Calu3 (cell line): ENCODE measurements at regions of chr7 and their contacts with region 1.

Region 1: DNA sequence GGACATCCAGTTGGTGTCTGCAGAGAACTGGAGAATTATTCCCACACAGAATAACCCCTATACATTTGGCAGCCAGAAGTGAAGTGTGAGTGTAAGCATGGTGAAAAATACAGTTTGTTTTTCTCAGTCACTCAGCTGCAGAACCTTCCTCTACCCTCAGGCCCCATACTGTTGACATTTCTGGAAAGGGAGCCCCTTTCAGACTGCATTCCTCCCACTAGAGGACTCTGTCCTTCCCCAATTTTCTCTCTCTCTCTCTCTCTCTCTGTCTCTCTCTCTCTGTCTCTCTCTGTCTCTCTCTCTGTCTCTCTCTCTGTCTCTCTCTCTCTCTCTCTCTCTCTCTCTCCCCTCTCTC is 86.8 kb upstream of the STEAP1B start:
- DNase-seq: peak; percentile 75
- H3K4me3 Mint-ChIP-seq: peak overlapping the region; percentile 44
- H3K27ac Mint-ChIP-seq: peak overlapping the region; percentile 93
- H3K4me1 Mint-ChIP-seq: peaks cover 78% of the 10 kb centered on the region
- H3K27me3 Mint-ChIP-seq: no peaks in the 10 kb centered on the region
- CTCF ChIP-seq: peak; percentile 31

Region 2: DNA sequence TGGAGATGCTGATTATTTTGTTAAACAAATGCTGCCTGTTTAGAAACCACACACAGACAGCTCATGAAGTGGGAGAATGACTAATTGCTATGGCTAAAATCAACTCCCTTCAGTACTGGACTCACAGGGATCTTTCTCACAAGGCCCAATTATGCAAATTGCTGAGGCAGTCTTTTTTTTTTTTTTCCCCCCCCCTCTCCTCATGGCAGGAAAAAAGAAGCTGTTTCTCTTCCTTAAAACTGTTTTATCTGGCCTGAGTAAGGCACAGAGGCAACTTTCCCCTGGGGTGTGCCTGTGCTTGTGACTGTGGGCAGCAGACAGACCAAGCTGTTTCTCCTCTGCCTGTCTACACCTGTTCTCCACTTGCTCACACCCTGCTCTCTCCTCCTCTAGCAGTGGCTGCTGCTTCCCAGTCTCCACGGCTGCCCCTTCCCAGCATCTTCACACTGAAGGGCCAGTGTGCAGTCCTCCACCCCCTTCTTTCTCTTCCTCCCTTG is 21.4 kb before region 1 on chr7:
- CTCF ChIA-PET with region 1: interaction called, 17 read pairs
- intact Hi-C with region 1: loop called (anchors 1 kb)
- DNase-seq: peak; percentile 45
- H3K4me3 Mint-ChIP-seq: peak overlapping the region; percentile 64
- H3K27ac Mint-ChIP-seq: peak overlapping the region; percentile 82
- H3K4me1 Mint-ChIP-seq: peaks cover 73% of the 10 kb centered on the region
- H3K27me3 Mint-ChIP-seq: no peaks in the 10 kb centered on the region
- CTCF ChIP-seq: no peak

Region 3: GRCh38 chr7:22647451-22648257 is 60.9 kb after region 1 on chr7:
- CTCF ChIA-PET with region 1: interaction called, 4 read pairs
- intact Hi-C with region 1: loop called (anchors 5 kb)
- DNase-seq: no peak
- H3K4me3 Mint-ChIP-seq: peak overlapping the region; percentile 4
- H3K27ac Mint-ChIP-seq: peak overlapping the region; percentile 71
- H3K4me1 Mint-ChIP-seq: peaks cover 39% of the 10 kb centered on the region
- H3K27me3 Mint-ChIP-seq: no peaks in the 10 kb centered on the region
- CTCF ChIP-seq: no peak

Region 4: GRCh38 chr7:22667562-22668239 is 80.9 kb after region 1 on chr7:
- CTCF ChIA-PET with region 1: interaction called, 7 read pairs
- intact Hi-C with region 1: loop called (anchors 2 kb)
- DNase-seq: peak; percentile 74
- H3K4me3 Mint-ChIP-seq: peak overlapping the region; percentile 1
- H3K27ac Mint-ChIP-seq: peak overlapping the region; percentile 83
- H3K4me1 Mint-ChIP-seq: peaks cover 69% of the 10 kb centered on the region
- H3K27me3 Mint-ChIP-seq: no peaks in the 10 kb centered on the region
- CTCF ChIP-seq: no peak

Region 5: GRCh38 chr7:22854158-22855048 is 267.6 kb after region 1 on chr7:
- CTCF ChIA-PET with region 1: no interaction called
- intact Hi-C with region 1: no loop called
- DNase-seq: peak; percentile 86
- H3K4me3 Mint-ChIP-seq: peak overlapping the region; percentile 89
- H3K27ac Mint-ChIP-seq: peak overlapping the region; percentile 67
- H3K4me1 Mint-ChIP-seq: peaks cover 14% of the 10 kb centered on the region
- H3K27me3 Mint-ChIP-seq: peaks cover 22% of the 10 kb centered on the region
- CTCF ChIP-seq: peak; percentile 99